Activated CD4-positive, alpha-beta T cell treated with anti-CD3 and anti-CD28 coated beads for 36 hours (primary cell): ENCODE measurements at regions of chr2 and their contacts with region 1.

Region 1: GRCh38 chr2:231463698-231464575 is at the start of gene NCL:
- DNase-seq: peak; percentile 92
- ATAC-seq: peak; percentile 93
- H3K4me3 Mint-ChIP-seq: peak within 1 kb of the TSS; percentile 98
- H3K27ac Mint-ChIP-seq: peak within 1 kb of the TSS; percentile 99
- H3K4me1 Mint-ChIP-seq: peaks cover 42% of the 10 kb centered on the region
- H3K27me3 Mint-ChIP-seq: no peaks in the 10 kb centered on the region
- total RNA-seq, gene NCL: 1,311 to 1,332 TPM

Region 2: GRCh38 chr2:231321556-231322334 is 142.2 kb before region 1 on chr2:
- CTCF ChIA-PET with region 1: no interaction called
- POLR2A ChIA-PET with region 1: no interaction called
- intact Hi-C with region 1: no loop called
- DNase-seq: no peak
- ATAC-seq: no peak
- H3K4me3 Mint-ChIP-seq: no peak overlapping the region
- H3K27ac Mint-ChIP-seq: no peak overlapping the region
- H3K4me1 Mint-ChIP-seq: peaks cover 5% of the 10 kb centered on the region
- H3K27me3 Mint-ChIP-seq: peaks cover 10% of the 10 kb centered on the region

Region 3: DNA sequence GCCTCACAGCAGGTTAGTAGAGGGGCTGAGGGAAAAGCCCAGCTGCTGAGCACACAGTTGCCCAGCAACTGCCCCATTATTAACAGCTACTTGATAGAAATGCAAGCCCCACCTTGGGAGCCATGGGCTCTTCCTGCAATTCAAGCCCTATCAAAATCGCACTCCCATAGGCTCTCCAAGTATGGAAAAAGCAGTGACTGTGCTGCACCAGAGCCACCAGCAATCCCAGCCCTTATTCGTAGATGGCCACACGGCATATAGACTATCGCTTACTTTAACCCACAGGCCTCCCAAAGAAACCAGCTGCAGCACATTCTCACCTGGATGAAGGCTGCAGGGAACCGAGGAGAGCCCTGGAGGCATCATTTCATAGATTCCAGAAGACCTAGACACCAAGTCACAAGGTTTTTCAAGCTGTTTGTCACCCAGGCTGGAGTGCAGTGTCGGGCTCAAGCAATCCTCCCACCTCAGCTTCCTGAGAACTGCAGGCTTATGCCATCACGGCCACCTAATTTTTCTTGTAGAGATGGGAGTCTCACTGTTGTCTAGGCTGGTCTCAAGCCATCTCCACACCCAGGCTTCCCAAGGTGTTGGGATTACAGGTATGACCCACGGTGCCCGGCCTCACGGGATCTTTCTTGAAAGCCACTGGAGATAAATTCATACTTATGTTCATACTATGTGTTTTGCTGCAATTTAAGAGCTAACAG is 11.0 kb before region 1 on chr2:
- CTCF ChIA-PET with region 1: interaction called, 11 read pairs
- POLR2A ChIA-PET with region 1: interaction called, 30 read pairs
- intact Hi-C with region 1: no loop called
- DNase-seq: peak; percentile 26
- ATAC-seq: peak; percentile 26
- H3K4me3 Mint-ChIP-seq: no peak overlapping the region
- H3K27ac Mint-ChIP-seq: no peak overlapping the region
- H3K4me1 Mint-ChIP-seq: peaks cover 18% of the 10 kb centered on the region
- H3K27me3 Mint-ChIP-seq: no peaks in the 10 kb centered on the region

Region 4: DNA sequence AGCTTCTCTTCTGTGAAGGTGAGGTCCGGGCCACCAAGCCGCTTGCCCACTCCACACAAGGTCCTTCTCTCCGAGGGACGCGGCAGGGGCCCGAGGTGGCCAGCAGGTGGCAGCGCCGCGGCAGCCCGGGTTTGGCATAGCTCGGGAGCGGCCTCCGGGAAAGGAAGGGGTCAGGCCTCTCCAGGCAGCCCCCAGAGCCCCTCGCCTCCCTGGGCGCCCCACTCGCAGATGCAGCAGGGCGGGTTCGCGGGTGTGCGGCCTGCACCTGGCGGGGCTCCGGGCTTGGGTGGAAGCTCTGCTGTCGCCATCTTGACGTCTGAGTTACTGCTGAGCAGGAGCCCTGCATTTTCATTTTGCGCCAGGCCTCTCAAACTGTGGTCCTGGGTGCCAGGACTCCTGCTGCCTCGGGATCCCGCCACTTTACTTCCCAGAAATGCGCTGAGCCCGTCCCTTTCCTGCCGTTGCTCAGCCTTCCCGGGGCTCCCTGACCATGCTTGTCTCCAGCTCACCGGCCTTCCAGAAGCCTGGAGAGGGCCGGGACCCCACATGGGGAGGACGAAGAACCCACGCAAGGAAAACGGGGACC is 19.0 kb after region 1 on chr2:
- CTCF ChIA-PET with region 1: interaction called, 96 read pairs
- POLR2A ChIA-PET with region 1: interaction called, 14 read pairs
- intact Hi-C with region 1: loop called (anchors 1 to 2 kb)
- DNase-seq: peak; percentile 85
- ATAC-seq: peak; percentile 83
- H3K4me3 Mint-ChIP-seq: peak overlapping the region; percentile 79
- H3K27ac Mint-ChIP-seq: peak overlapping the region; percentile 87
- H3K4me1 Mint-ChIP-seq: peaks cover 7% of the 10 kb centered on the region
- H3K27me3 Mint-ChIP-seq: no peaks in the 10 kb centered on the region

Region 5: GRCh38 chr2:231604685-231605606 is 141.0 kb after region 1 on chr2:
- CTCF ChIA-PET with region 1: interaction called, 4 read pairs
- POLR2A ChIA-PET with region 1: no interaction called
- intact Hi-C with region 1: loop called in 1 of 2 experiments (anchors 2 kb)
- DNase-seq: peak; percentile 98
- ATAC-seq: peak; percentile 81
- H3K4me3 Mint-ChIP-seq: peak overlapping the region; percentile 26
- H3K27ac Mint-ChIP-seq: no peak overlapping the region
- H3K4me1 Mint-ChIP-seq: peaks cover 6% of the 10 kb centered on the region
- H3K27me3 Mint-ChIP-seq: peaks cover 2% of the 10 kb centered on the region

Region 6: DNA sequence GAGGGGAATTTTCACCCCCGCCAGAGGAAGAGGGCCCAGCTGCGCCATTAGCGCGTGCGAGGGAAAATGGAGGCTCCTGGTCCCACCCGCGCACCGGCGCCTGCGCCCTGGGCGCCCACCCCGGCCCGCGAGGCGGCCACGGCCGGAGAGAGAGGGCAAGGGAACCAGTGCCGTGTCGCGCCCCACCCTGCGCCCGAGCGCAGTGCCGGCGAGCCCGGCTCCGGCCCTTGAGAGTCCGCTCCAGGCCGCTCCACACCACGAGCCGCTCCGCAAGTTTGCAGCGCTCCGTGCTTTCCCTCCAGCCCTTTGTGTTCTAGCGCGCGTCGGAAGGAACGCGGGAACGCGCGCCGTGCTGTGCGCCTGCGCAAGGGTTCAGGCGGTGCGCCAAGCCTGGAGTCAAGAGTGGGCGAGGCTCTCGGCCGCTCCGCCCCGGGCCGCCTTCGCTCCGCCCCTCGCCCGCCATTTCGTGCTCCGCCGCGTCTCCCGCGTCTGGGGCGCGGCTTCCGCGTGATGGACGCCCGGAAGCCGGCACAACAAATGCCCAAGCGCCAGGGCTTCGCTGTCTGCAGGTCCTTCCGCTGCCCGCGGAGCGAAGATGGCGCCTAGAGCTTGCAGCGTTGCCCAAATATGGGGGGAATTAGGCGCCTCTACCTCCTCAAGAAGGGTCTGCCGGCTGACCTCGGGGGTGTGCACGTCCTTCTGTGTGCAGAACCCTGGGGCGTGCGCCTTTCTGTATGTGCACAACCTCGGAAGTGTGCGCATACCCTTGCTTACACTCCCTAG is 198.3 kb after region 1 on chr2:
- CTCF ChIA-PET with region 1: no interaction called
- POLR2A ChIA-PET with region 1: interaction called, 4 read pairs
- intact Hi-C with region 1: loop called in 1 of 2 experiments (anchors 1 kb)
- DNase-seq: peak; percentile 98
- ATAC-seq: peak; percentile 92
- H3K4me3 Mint-ChIP-seq: peak overlapping the region; percentile 72
- H3K27ac Mint-ChIP-seq: peak overlapping the region; percentile 96
- H3K4me1 Mint-ChIP-seq: peaks cover 23% of the 10 kb centered on the region
- H3K27me3 Mint-ChIP-seq: no peaks in the 10 kb centered on the region

Region 7: DNA sequence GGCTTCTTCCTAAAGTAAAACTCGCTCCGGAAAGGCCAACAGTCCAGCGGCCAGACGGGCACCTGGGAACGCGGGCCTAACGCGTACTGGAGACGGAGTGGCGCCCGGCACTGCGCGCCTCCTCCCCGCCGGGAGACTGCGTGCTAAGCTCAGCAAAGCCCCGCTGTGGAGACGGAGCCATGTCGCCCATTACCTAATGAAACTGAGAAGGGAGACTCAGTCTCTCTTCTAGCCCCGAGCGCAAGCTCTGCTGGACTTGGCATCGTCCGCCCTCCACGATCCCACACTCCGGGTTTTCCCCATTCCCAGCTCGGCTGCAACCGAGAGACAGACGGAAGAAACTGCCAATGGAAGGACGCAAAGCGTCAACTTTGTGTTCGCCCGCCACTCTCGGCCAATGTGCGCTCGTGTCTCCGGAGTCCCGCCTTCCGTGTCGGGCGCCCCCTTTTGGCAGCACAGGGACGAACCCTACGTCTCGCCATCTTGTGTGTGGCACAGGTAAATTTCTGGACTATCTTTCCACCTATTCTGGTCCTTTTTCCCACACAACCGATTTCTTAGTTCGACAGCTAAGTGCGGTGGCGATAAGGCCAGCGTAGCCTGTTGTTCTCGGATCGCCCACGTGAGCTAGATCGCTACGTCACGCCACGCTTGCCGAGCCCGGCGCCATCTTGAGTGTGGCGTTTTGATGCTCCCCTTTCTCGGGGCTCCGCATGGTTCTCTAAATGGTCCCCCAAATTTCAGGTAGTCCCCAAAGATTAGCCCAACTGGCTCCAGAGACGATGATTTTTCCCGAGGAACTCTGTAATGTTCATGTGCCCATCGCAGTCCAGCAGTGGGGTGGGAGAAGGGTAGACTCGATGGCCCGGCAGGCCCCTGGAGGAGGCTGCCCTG is 243.0 kb after region 1 on chr2:
- CTCF ChIA-PET with region 1: interaction called, 10 read pairs
- POLR2A ChIA-PET with region 1: interaction called, 24 read pairs
- intact Hi-C with region 1: loop called (anchors 1 to 2 kb)
- DNase-seq: peak; percentile 99
- ATAC-seq: peak; percentile 59
- H3K4me3 Mint-ChIP-seq: peak overlapping the region; percentile 85
- H3K27ac Mint-ChIP-seq: peak overlapping the region; percentile 100
- H3K4me1 Mint-ChIP-seq: peaks cover 15% of the 10 kb centered on the region
- H3K27me3 Mint-ChIP-seq: peaks cover 2% of the 10 kb centered on the region

Region 8: GRCh38 chr2:231955758-231956472 is 492.0 kb after region 1 on chr2:
- CTCF ChIA-PET with region 1: no interaction called
- POLR2A ChIA-PET with region 1: no interaction called
- intact Hi-C with region 1: loop called in 1 of 2 experiments (anchors 5 kb)
- DNase-seq: no peak
- ATAC-seq: peak; percentile 30
- H3K4me3 Mint-ChIP-seq: no peak overlapping the region
- H3K27ac Mint-ChIP-seq: no peak overlapping the region
- H3K4me1 Mint-ChIP-seq: peaks cover 3% of the 10 kb centered on the region
- H3K27me3 Mint-ChIP-seq: peaks cover 8% of the 10 kb centered on the region